ENCODE measurements at regions of chr1 and their contacts with region 1.

Region 1: GRCh38 chr1:89843281-89844121 is 22.7 kb downstream of the LRRC8D start:
- DNase-seq: peak; percentile 64 to 85 (median 73)
- H3K4me3 ChIP-seq: peak overlapping the region; percentile 86
- H3K4me3 Mint-ChIP-seq: peak overlapping the region; percentile 89 to 98 (median 95)
- H3K27ac ChIP-seq: peak overlapping the region; percentile 72
- H3K27ac Mint-ChIP-seq: peak overlapping the region; percentile 81 to 98 (median 94)
- H3K4me1 ChIP-seq: peaks cover 40% of the 10 kb centered on the region
- H3K4me1 Mint-ChIP-seq: peaks cover 49 to 59% (median 58%) of the 10 kb centered on the region in 3 donors
- H3K27me3 ChIP-seq: no peaks in the 10 kb centered on the region
- H3K27me3 Mint-ChIP-seq: no peaks in the 10 kb centered on the region

Region 2: GRCh38 chr1:89820422-89821321 is 22.8 kb before region 1 on chr1 and contains the start of gene LRRC8D:
- CTCF ChIA-PET with region 1: interaction called, 28 read pairs
- POLR2A ChIA-PET with region 1: interaction called, 28 read pairs
- DNase-seq: peak; percentile 49 to 73 (median 71)
- H3K4me3 ChIP-seq: peak within 1 kb of the TSS; percentile 83
- H3K4me3 Mint-ChIP-seq: peak within 1 kb of the TSS; percentile 85 to 92 (median 88)
- H3K27ac ChIP-seq: peak within 1 kb of the TSS; percentile 72
- H3K27ac Mint-ChIP-seq: peak within 1 kb of the TSS in 7 of 8 donors; percentile 21 to 93 (median 86)
- H3K4me1 ChIP-seq: peaks cover 19% of the 10 kb centered on the region
- H3K4me1 Mint-ChIP-seq: peaks cover 26 to 36% (median 33%) of the 10 kb centered on the region in 3 donors
- H3K27me3 ChIP-seq: no peaks in the 10 kb centered on the region
- H3K27me3 Mint-ChIP-seq: no peaks in the 10 kb centered on the region
- total RNA-seq, gene LRRC8D: 39.0 to 41.9 TPM

Region 3: GRCh38 chr1:89833183-89834082 is 10.1 kb before region 1 on chr1:
- CTCF ChIA-PET with region 1: interaction called, 10 read pairs
- POLR2A ChIA-PET with region 1: interaction called, 3 read pairs
- DNase-seq: no peak
- H3K4me3 ChIP-seq: no peak overlapping the region
- H3K4me3 Mint-ChIP-seq: no peak overlapping the region
- H3K27ac ChIP-seq: no peak overlapping the region
- H3K27ac Mint-ChIP-seq: peak overlapping the region in 1 of 8 donors; percentile 29
- H3K4me1 ChIP-seq: no peaks in the 10 kb centered on the region
- H3K4me1 Mint-ChIP-seq: peaks cover 4 to 10% (median 8%) of the 10 kb centered on the region in 3 donors
- H3K27me3 ChIP-seq: no peaks in the 10 kb centered on the region
- H3K27me3 Mint-ChIP-seq: no peaks in the 10 kb centered on the region

Region 4: GRCh38 chr1:89855413-89856123 is 12.1 kb after region 1 on chr1:
- CTCF ChIA-PET with region 1: interaction called, 10 read pairs
- POLR2A ChIA-PET with region 1: interaction called, 12 read pairs
- DNase-seq: peak in 2 of 5 donors; percentile 68 to 73
- H3K4me3 ChIP-seq: no peak overlapping the region
- H3K4me3 Mint-ChIP-seq: peak overlapping the region in 5 of 7 donors; percentile 5 to 77 (median 72)
- H3K27ac ChIP-seq: peak overlapping the region; percentile 17
- H3K27ac Mint-ChIP-seq: peak overlapping the region in 1 of 8 donors; percentile 8
- H3K4me1 ChIP-seq: peaks cover 27% of the 10 kb centered on the region
- H3K4me1 Mint-ChIP-seq: peaks cover 6 to 16% (median 14%) of the 10 kb centered on the region in 3 donors
- H3K27me3 ChIP-seq: no peaks in the 10 kb centered on the region
- H3K27me3 Mint-ChIP-seq: no peaks in the 10 kb centered on the region

Region 5: GRCh38 chr1:89918127-89918793 is 74.8 kb after region 1 on chr1:
- CTCF ChIA-PET with region 1: no interaction called
- POLR2A ChIA-PET with region 1: no interaction called
- DNase-seq: no peak
- H3K4me3 ChIP-seq: no peak overlapping the region
- H3K4me3 Mint-ChIP-seq: no peak overlapping the region
- H3K27ac ChIP-seq: no peak overlapping the region
- H3K27ac Mint-ChIP-seq: peak overlapping the region in 1 of 8 donors; percentile 62
- H3K4me1 ChIP-seq: no peaks in the 10 kb centered on the region
- H3K4me1 Mint-ChIP-seq: peaks cover 10 to 30% (median 27%) of the 10 kb centered on the region in 3 donors
- H3K27me3 ChIP-seq: no peaks in the 10 kb centered on the region
- H3K27me3 Mint-ChIP-seq: no peaks in the 10 kb centered on the region